ENCODE measurements at regions of chr3 and their contacts with region 1.

Region 1: GRCh38 chr3:148880681-148881080 is 15.6 kb downstream of the CPA3 start:
- DNase-seq: peak; percentile 33
- ATAC-seq: peak; percentile 70
- H3K4me3 ChIP-seq: no peak overlapping the region
- H3K27ac ChIP-seq: no peak overlapping the region
- H3K4me1 ChIP-seq: no peaks in the 10 kb centered on the region
- H3K27me3 ChIP-seq: no peaks in the 10 kb centered on the region
- CTCF ChIP-seq: peak; percentile 48
- EP300 ChIP-seq: no peak
- POLR2A ChIP-seq: no peak
- RAD21 ChIP-seq: peak; percentile 23; the same call in 1 of the 2 replicates

Region 2: GRCh38 chr3:148379763-148380382 is 500.8 kb before region 1 on chr3:
- CTCF ChIA-PET with region 1: no interaction called
- POLR2A ChIA-PET with region 1: no interaction called
- in situ Hi-C with region 1: no loop called
- intact Hi-C with region 1: loop called (anchors 5 kb)
- DNase-seq: peak; percentile 71
- ATAC-seq: peak; percentile 98
- H3K4me3 ChIP-seq: no peak overlapping the region
- H3K27ac ChIP-seq: no peak overlapping the region
- H3K4me1 ChIP-seq: no peaks in the 10 kb centered on the region
- H3K27me3 ChIP-seq: no peaks in the 10 kb centered on the region
- CTCF ChIP-seq: peak; percentile 86
- EP300 ChIP-seq: peak in 1 of 2 experiments; percentile 15; a peak in 1 of 4 replicates
- POLR2A ChIP-seq: no peak
- RAD21 ChIP-seq: peak; percentile 73

Region 3: DNA sequence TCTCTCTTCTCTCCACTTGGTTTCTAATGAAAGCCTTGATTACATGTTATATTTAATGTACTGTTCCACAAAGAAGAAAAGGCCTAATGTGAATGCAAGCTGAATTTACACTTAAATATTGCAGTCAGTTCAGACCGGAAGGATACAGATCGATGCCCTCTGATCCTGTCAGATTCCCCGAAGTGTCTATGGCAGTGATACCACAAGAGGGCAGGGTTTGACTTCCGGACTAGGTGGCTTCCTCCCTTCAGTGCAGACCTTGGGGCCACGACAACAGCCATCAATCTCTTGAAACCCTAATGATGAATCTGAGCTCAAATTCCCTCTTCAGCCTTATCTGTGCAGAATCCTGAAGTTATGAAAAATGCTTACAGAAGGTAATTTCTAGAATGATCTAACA is 153.4 kb before region 1 on chr3:
- CTCF ChIA-PET with region 1: no interaction called
- POLR2A ChIA-PET with region 1: no interaction called
- in situ Hi-C with region 1: no loop called
- intact Hi-C with region 1: loop called (anchors 5 kb)
- DNase-seq: peak; percentile 30
- ATAC-seq: peak; percentile 87
- H3K4me3 ChIP-seq: no peak overlapping the region
- H3K27ac ChIP-seq: no peak overlapping the region
- H3K4me1 ChIP-seq: peaks cover 12% of the 10 kb centered on the region; the same call in 1 of the 2 replicates
- H3K27me3 ChIP-seq: no peaks in the 10 kb centered on the region
- CTCF ChIP-seq: peak; percentile 75
- EP300 ChIP-seq: no peak
- POLR2A ChIP-seq: no peak
- RAD21 ChIP-seq: peak; percentile 22; the same call in 1 of the 2 replicates

Region 4: GRCh38 chr3:148861277-148861869 is 19.3 kb before region 1 on chr3:
- CTCF ChIA-PET with region 1: no interaction called
- POLR2A ChIA-PET with region 1: no interaction called
- in situ Hi-C with region 1: no loop called
- intact Hi-C with region 1: loop called (anchors 1 kb)
- DNase-seq: peak; percentile 29
- ATAC-seq: 0 out of 3 replicates have a peak, but pooled peaks have one; percentile 49
- H3K4me3 ChIP-seq: no peak overlapping the region
- H3K27ac ChIP-seq: no peak overlapping the region
- H3K4me1 ChIP-seq: no peaks in the 10 kb centered on the region
- H3K27me3 ChIP-seq: no peaks in the 10 kb centered on the region; a peak in 1 of 5 replicates
- CTCF ChIP-seq: peak; percentile 64
- EP300 ChIP-seq: no peak
- POLR2A ChIP-seq: no peak
- RAD21 ChIP-seq: peak; percentile 43; the same call in 1 of the 2 replicates